A673 (cell line): ENCODE measurements at regions of chr5 and their contacts with region 1.

Region 1: DNA sequence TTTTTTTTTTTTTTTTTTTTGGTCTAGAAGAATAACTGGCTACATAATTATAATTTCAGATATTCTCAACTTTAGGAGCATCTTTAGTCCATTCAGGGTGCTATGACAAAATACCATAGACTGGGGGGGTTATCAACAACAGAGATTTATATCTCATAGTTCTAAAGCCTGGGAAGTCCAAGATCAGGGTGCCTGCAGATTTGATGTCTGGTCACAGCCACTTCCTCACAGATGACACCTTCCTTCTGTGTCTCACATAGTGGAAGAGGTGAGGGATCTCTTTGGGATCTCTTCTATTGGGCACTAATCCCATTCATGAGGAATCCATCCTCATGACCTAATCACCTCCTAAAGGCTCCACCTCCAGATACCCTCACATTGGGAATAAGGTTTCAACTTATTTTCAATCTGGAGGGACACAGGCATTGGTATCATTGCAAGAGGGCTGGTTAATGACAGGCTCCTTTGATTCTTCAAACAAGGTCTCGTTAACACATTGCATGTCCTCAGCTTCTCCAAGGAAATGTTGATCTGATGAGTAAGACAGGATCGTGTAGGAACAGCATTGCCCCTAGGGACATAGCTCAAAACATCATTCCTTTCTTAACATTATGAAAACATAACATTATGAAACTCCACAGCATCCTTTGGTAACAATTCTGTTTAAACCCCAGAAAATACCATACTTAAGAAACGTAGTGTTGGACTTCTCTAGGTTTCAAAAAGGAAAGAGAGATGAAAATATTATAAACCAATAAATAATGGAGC is 372.4 kb downstream of the SEMA5A start:
- DNase-seq: no peak
- H3K4me3 ChIP-seq: no peak overlapping the region
- H3K27ac ChIP-seq: no peak overlapping the region
- H3K4me1 ChIP-seq: no peaks in the 10 kb centered on the region
- H3K27me3 ChIP-seq: no peaks in the 10 kb centered on the region
- CTCF ChIP-seq: no peak

Region 2: GRCh38 chr5:9268226-9268625 is 94.8 kb after region 1 on chr5:
- CTCF ChIA-PET with region 1: no interaction called
- POLR2A ChIA-PET with region 1: interaction called, 12 read pairs
- intact Hi-C with region 1: no loop called
- DNase-seq: no peak
- H3K4me3 ChIP-seq: no peak overlapping the region
- H3K27ac ChIP-seq: no peak overlapping the region
- H3K4me1 ChIP-seq: no peaks in the 10 kb centered on the region
- H3K27me3 ChIP-seq: no peaks in the 10 kb centered on the region
- CTCF ChIP-seq: no peak